ENCODE measurements at regions of chr7 and their contacts with region 1.

Region 1: DNA sequence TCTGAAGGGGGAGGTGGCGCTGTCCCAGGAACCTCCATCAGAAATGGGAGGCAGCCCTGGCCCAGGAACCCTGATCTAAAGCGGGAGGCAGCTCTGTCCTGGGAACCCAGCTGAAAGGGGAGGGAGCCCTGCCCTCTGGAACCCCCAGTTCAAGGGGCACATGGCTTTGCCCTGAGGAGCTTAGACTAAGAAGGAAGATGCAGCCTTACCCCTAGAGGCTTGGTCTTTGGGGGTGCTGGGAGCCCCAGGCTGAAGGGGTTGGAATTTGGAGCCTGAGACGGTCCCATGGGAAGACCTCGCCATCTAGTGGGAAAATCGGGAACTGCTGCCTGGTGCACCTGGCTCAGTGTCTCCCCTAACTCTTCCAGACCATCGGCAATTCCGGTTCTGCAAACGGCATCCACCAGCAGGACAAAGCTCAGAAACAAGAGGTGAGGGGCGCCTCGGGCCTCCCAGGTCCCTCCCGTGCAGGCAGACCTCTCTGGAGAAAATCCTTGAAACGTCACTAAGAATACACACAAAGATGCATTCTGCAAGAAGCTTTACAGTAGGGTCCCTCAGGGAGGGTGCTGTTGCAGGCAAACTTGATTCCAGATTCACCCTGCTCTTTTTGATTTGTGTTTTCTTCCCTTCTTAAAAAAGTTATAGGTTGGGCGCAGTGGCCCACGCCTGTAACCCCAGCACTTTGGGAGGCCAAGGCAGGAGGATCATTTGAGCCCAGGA is 52.4 kb upstream of the GTF2IRD1 start:
- DNase-seq: peak; percentile 88
- ATAC-seq: peak; percentile 70

Region 2: DNA sequence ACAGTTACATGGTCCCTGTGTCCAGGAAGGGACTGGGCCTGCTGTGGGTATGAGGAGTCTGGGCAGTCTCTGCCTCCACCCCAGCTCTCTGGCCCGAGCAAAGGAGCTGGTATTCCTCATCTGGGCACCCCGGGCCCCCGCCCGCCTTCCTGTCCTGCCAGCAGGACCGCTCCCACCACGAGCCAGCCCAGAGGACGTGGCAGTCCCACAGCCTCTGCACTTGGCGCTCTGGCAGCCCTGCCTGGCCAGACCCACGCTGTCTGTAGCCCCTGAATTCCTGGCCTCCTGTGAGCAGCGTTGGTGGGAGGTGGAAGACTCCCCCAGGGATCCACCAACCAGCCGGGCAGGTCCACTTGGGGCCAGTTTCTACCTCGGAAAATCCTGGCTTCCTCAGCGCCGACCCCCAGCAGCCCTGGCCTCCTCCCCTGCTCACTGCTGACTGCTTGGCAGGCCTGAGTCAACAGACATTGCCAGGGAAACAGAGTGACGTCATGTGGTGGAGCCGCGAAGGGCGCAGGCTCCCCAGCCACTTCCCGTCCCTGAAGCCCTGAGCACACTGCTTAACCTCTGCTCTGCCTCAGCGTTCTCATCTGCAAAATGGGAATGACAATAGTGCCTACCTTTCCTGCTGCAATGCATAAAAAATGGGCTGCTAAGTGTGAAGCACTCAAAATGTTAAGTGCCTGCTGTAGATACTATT is 339.3 kb before region 1 on chr7:
- intact Hi-C with region 1: loop called (anchors 10 kb)
- DNase-seq: peak; percentile 88
- ATAC-seq: peak; percentile 95

Region 3: GRCh38 chr7:74206589-74207120 is 194.6 kb before region 1 on chr7:
- intact Hi-C with region 1: loop called (anchors 5 kb)
- DNase-seq: peak; percentile 95
- ATAC-seq: peak; percentile 86

Measured in sciatic nerve (tissue), 2 donors.